Activated T-helper 1 cell treated with anti-CD3 and anti-CD28 coated beads, Interleukin-12 subunit alpha, Interleukin-12 subunit beta, Interleukin-2, Interleukin-4 antibody, amounts not matched to agents 30 ng/mL and 10 ng/mL and 1 ng/mL, durations not matched to agents 14 hours and 24 hours and 36 hours (primary cell): ENCODE measurements at regions of chr6 and their contacts with region 1.

Region 1: DNA sequence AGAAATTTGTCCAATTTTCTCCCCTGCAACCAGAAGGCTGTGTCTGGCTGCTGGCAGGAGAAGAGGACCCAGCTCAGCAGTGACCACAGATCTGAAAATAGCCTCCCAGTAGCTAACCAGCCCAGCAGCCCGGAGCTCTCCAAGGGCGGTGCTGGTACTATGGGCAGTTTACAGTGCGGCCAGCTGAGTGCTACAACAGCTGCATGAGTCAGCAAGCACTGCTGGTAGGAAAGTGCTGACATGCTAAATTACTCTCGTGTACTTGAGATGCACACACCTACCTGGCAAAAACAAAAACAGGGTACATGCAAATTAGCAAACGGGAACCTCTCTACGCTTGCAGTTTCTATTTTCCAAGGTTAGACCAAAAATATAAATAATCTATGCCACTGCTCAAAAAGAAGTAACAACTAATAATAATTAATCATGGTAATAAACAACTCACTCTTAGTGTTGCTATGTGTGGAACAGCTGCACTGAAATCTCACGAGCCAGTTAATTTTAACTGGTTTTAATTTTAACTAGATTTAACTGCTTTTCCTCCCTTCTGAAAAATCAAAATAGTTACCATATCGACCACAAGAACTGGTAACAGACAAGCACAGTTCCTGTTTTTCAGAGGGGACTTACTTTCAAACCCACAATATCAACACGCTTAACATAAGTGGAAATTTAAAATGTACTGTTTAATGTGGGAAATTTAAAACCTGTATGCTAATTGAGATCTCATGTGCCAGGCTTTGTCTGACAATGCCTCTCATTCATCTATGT is 10.8 kb downstream of the BACH2 start:
- DNase-seq: peak; percentile 47
- H3K4me3 Mint-ChIP-seq: peak overlapping the region; percentile 79
- H3K27ac Mint-ChIP-seq: peak overlapping the region; percentile 97
- H3K4me1 Mint-ChIP-seq: peaks cover 89% of the 10 kb centered on the region
- H3K27me3 Mint-ChIP-seq: peaks cover 3% of the 10 kb centered on the region

Region 2: DNA sequence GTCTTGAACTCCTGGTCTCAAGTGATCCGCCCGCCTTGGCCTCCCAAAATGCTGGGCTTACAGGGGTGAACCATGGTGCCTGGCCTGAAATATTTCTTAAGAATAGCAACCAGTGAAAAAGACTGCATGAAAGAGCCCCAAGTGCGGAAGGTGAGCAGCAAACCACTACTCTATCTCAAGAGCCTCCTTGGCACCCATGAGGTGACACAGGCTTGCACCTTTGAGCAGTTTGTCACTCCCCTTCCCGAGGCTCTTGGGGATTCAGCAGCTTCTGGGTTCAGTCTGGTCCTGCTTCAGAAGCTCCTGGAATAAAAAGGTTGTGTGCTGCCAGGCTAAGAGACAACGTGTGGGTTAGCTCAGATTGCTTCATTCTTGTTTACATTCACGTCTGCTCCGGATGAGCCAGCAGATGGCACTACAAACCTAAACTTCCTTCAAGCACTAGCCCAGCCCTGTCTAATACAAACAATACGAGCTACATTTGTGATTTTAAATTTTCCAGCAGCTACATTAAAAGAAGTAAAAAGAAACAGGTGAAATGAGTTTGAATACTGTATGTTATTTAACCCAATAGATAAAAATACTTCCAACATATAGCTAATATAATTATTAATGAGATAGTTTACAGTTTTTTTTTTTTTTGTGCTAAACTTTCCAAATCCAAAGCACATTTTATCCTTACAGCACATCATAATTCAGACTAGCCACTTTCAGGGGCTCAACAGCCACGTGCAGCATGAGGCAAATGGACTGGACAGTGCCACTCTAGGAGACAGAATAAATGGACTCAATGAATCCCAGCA is 345.4 kb before region 1 on chr6:
- intact Hi-C with region 1: loop called (anchors 1 kb)
- DNase-seq: peak; percentile 57
- H3K4me3 Mint-ChIP-seq: no peak overlapping the region
- H3K27ac Mint-ChIP-seq: no peak overlapping the region
- H3K4me1 Mint-ChIP-seq: peaks cover 25% of the 10 kb centered on the region
- H3K27me3 Mint-ChIP-seq: no peaks in the 10 kb centered on the region

Region 3: GRCh38 chr6:90179190-90180169 is 106.3 kb before region 1 on chr6:
- intact Hi-C with region 1: loop called (anchors 1 kb)
- DNase-seq: no peak
- H3K4me3 Mint-ChIP-seq: no peak overlapping the region
- H3K27ac Mint-ChIP-seq: no peak overlapping the region
- H3K4me1 Mint-ChIP-seq: peaks cover 69% of the 10 kb centered on the region
- H3K27me3 Mint-ChIP-seq: no peaks in the 10 kb centered on the region

Region 4: DNA sequence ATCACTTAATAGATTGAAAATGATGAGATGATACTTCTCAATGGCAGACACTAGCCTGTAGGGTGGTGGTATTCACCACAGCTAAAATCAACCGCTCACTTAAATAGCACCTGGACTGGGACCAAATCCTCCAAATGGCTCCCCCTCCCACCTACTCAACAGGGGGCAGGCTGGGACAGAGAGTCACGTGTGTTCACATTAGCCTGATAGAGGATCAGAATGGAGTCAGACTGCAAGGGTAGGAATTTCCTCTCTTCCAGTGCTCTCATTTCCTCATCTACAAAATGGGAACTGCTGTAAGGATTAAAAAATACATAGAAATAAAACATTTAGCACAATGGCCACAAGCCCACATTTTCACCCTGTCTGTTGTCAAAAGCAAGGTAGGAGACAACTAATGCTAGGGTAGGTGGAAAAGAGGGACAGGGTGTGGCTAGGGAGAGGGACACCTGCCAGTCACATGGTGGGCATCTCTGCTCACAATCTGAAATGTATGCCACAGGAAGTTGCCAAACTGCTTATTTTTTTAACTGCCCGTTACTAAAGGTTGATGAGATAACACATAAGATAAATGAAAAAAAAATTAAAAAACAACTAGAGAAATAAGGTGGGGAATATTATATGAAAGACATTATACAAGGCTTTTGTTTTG is 44.4 kb before region 1 on chr6:
- intact Hi-C with region 1: loop called (anchors 1 kb)
- DNase-seq: no peak
- H3K4me3 Mint-ChIP-seq: no peak overlapping the region
- H3K27ac Mint-ChIP-seq: no peak overlapping the region
- H3K4me1 Mint-ChIP-seq: peaks cover 63% of the 10 kb centered on the region
- H3K27me3 Mint-ChIP-seq: no peaks in the 10 kb centered on the region

Region 5: DNA sequence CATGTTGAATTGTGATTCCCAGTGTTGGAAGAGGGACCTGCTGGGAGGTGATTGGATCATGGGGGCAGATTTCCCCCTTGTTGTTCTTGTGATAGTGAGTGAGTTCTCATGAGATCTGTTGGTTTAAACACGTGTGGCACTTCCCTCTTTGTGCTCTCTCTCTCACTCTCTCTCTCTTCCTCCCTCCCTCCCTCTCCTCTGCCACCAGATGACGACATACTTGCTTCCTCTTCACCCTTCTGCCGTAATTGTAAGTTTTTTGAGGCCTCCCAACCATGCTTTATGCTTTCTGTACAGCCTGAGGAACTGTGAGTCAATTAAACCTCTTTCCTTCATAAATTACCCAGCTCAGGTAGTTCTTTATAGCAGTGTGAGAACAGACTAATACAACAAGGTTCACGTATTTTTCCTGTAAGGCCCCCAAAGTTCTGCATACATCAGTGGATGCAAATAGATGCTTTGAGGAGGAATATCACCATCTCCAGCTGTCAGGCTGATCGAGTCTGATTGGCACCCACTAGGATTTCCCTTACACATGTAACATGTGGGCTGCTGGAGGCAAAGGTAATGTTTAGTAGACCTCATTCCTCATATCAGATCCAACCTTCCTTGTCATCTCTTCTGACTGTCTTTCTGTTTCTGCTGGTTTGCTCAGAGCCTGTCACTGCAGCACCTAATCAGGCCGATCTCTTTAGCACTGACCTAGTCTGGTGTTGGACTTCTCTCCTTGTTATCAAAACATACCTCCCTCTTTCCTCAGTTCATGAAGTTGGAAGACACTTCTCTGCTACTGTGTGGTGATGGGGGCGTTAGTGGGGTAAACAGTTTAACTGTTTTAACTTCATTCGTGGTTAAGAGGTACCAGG is 65.1 kb after region 1 on chr6:
- intact Hi-C with region 1: loop called (anchors 2 kb)
- DNase-seq: peak; percentile 38
- H3K4me3 Mint-ChIP-seq: peak overlapping the region; percentile 39
- H3K27ac Mint-ChIP-seq: peak overlapping the region; percentile 78
- H3K4me1 Mint-ChIP-seq: peaks cover 46% of the 10 kb centered on the region
- H3K27me3 Mint-ChIP-seq: peaks cover 10% of the 10 kb centered on the region

Region 6: DNA sequence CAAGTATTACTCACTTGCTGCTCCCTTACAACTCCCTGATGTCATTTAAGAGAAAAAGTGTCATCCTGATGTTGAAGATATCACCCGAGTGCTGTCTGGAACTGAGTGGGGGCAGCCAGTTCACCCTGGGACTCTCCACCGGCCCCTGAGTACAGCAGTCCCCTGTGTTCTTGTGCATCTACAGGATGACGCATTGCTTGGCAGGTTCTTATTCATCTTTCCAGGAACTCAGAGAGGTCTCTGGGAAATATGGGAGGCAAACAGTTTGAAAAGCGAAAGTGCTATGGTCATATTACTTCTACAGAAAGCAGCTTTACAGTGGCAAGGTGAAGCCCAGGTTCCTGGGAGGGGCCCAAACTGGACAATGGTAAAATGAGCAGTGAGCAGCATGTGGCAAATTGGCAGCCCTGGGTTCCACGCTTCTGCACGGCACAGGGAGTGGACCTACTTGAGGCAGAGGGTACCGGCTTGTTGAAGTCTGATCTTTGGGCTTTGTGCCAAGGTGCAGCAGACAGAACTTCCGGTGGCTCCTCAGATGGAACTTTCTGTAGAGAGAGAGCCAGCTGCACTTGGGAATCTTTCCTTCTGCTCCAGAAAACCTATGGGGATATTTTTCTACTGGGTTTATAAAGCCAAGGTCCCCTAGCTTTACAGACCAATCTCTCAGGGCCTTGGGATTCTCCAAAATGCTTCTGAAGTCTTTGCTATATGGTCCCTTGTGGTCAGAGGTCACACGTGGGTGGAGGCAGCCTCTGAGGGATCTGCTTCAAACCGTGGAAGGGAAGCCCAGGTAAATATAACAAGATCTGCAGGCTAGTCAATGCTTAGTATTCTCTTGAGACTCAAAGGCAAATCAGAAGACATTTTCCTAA is 172.8 kb after region 1 on chr6:
- intact Hi-C with region 1: loop called (anchors 1 kb)
- DNase-seq: peak; percentile 66
- H3K4me3 Mint-ChIP-seq: peak overlapping the region; percentile 47
- H3K27ac Mint-ChIP-seq: peak overlapping the region; percentile 93
- H3K4me1 Mint-ChIP-seq: peaks cover 65% of the 10 kb centered on the region
- H3K27me3 Mint-ChIP-seq: no peaks in the 10 kb centered on the region